Right ventricle myocardium superior (tissue), 1 donor: ENCODE measurements at regions of chr1 and their contacts with region 1.

Region 1: DNA sequence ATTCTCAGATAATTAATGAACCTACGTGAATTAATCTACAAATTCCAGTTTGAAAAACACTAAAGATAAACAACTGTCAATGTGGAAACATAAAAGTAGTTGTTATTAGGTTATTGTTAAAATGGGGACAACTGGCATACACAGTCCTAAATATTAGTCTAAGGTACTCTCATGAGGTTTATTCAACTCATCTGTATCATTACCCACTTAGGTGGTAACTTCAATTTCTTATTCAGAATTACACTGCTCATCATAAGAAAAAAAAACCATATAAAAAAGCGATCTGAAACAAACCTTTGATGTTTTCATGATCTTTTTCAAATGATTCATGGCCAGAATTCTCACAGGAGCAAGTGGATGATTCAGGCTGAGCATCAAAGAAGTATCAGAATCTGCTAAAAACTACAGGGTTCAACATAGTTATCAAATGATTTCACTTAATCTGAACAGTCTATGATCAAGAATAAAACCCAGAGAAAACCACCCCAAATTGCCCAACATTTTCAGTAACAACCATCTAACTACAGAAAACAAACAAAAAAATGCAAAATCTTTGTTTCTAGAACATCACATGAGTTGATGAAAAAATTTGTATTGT is 13.7 kb downstream of the HEATR1 start:
- DNase-seq: no peak
- ATAC-seq: no peak

Region 2: DNA sequence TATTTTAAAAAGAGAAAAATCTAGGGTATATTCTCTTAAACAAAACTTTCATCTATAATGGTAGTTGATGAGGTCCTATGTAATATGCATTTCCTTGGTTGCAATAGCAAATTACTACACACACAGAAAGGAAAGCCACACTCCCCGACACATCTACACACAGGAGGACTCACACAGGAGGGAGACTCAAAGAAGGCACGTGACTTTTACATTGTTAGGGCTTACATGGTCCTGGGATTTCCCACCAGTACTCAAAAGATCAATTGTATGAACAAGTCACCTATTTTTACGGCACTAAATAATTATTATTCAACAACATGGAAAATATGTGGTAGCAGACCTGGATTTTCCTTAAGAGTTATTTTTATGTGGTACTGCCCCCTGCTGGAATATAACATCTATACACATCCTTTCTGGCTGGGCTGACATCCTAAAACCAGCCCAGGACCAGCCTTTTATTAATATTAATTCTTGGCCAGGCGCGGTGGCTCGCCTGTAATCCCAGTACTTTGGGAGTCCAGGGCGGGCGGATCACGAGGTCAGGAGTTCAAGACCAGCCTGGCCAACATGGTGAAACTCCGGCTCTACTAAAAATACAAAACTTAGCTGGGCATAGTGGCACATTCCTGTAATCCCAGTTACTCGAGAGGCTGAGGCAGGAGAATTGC is 100.8 kb before region 1 on chr1:
- intact Hi-C with region 1: no loop called
- DNase-seq: no peak
- ATAC-seq: peak; percentile 65

Region 3: DNA sequence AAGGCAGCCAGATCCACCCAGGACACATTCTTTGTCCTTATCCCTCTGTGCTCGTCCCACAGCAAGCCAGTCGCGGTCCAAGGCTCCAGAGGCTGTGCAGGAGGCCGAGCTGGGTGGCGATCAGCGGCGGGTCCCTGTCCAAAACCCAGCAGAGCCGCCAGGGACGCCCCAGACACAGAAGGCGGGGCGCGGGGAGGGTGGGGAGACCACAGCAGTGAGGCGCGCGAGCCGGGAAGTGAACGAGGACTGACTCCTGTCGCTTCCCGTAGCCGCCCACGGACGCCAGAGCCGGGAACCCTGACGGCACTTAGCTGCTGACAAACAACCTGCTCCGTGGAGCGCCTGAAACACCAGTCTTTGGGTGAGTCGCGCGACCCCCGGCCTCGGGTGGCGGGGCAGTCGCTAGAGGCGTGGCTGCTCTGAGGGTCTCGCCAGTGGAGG is 66.9 kb before region 1 on chr1 and contains the start of gene LGALS8:
- intact Hi-C with region 1: no loop called
- DNase-seq: peak; percentile 95
- ATAC-seq: peak; percentile 97
- total RNA-seq, gene LGALS8: 78.2 TPM

Region 4: DNA sequence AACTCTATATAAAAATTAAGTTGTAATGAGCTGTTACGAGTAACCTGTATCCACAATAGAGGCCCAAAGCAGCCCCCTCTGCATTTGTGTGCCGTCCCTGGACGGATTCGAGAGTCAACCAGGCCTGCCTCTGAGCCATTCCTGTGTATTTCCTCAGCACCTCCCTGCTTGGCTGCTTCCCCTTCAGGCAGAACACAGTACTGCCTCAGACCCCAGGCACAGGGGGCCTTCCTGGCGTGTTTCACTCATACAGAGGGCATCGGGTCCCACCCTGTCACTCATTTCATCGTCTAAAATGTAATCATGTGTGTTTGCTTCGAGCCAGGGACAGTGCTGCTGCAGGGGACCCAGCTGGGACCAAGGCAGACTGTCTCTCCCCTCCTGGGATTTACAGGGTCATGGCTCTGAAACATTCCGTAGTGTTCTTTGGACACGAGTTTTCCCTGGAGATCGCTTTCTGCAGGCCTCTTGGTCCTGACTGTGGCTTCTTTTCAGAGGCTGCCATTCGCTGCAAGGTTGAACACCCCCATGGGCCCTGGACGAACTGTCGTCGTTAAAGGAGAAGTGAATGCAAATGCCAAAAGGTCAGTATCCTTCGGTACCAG is 47.5 kb before region 1 on chr1:
- intact Hi-C with region 1: loop called (anchors 10 kb)
- DNase-seq: no peak
- ATAC-seq: no peak

Region 5: GRCh38 chr1:236568285-236568894 is 22.3 kb before region 1 on chr1:
- intact Hi-C with region 1: no loop called
- DNase-seq: no peak
- ATAC-seq: no peak